Activated CD4-positive, alpha-beta T cell treated with anti-CD3 and anti-CD28 coated beads for 36 hours (primary cell): ENCODE measurements at regions of chrX and their contacts with region 1.

Region 1: DNA sequence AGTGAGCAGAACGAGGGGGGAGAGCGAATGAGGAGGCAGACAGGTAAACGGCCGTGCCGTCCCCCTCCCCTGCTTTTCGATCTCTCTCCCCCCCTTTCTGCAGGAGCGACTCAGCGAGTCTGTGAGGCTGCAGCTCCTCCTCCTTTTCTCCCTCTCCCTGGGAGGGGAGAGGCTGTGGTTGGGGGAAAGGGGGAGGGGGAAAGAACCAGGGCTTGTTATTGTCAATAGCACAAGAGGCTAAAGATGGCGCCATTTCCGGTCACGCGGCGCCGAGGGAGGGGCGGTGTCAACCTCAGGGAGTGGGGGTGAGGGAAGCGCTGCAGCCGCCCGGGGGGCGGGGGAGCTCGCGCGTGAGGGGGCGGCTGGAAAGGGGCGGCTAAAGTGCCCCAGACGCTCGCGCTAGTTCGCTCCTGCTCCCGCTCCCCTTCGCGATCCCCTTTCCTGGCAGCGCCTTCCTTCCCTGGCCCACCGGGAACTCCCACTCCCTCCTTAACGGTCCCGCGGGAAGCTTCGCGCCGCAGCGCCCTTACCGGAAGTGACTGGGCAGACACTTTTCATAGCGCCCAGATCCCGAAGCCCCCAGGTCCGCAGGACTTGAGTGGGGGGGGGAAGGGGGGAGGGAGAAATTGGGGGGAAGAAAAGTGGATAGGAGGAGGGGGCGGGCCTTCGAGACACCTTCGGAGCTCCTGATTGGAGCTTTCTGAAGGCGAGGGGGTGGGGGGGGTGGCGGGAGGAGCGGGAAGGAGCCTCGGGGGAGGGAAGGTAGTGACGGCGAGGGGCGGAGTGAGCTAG is at the start of gene CUL4B:
- DNase-seq: peak; percentile 95
- ATAC-seq: peak; percentile 86
- H3K4me3 Mint-ChIP-seq: peak within 1 kb of the TSS; percentile 90
- H3K27ac Mint-ChIP-seq: peak within 1 kb of the TSS; percentile 95
- H3K4me1 Mint-ChIP-seq: peaks cover 21% of the 10 kb centered on the region
- H3K27me3 Mint-ChIP-seq: no peaks in the 10 kb centered on the region
- total RNA-seq, gene CUL4B: 49.2 to 49.6 TPM

Region 2: DNA sequence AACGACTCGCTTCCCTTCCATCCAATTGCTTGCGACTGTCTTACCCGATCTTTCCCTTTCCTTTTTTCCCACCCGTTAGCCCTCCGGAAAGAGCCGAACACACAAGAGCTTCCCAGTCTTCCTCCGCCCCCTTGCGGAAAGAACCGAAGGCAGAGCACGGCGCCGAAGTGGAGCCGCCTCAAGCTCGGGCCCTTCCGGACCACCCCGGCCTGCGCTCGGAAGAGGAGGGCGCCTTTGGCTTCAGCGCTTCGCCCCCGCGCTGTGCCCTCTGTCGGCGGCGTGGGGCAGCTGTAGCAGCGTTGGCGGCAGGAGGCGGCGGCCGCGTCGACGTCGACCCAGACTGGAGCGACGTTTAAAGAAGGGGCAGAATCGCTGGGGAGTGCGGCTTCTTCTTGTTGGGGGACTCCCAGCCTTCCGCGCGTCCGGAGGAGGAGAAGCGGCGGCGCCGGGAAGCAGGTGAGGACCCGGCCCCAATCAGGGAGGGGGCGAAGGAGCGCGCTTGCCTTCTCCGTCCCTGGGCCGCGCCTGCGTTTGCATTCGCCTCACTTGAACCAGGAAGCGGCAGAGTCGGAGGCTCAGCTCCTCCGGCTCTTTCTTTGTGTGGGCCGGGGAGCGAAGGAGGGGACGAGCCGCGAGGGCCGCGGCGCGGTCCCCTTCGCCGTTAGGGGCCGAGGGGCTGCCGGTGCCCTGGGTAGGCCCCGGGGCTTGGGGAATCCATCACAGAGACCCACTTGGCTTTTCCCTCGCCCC is 310.3 kb before region 1 on chrX and contains the start of gene ZBTB33:
- CTCF ChIA-PET with region 1: no interaction called
- POLR2A ChIA-PET with region 1: no interaction called
- intact Hi-C with region 1: loop called in 1 of 2 experiments (anchors 2 kb)
- DNase-seq: peak; percentile 92
- ATAC-seq: peak; percentile 99
- H3K4me3 Mint-ChIP-seq: peak within 1 kb of the TSS; percentile 94
- H3K27ac Mint-ChIP-seq: peak within 1 kb of the TSS; percentile 92
- H3K4me1 Mint-ChIP-seq: peaks cover 22% of the 10 kb centered on the region
- H3K27me3 Mint-ChIP-seq: no peaks in the 10 kb centered on the region
- total RNA-seq, gene ZBTB33: 14.5 to 14.6 TPM

Region 3: GRCh38 chrX:120499301-120500072 is 61.6 kb before region 1 on chrX:
- CTCF ChIA-PET with region 1: no interaction called
- POLR2A ChIA-PET with region 1: interaction called, 5 read pairs
- intact Hi-C with region 1: loop called (anchors 2 kb)
- DNase-seq: no peak
- ATAC-seq: no peak
- H3K4me3 Mint-ChIP-seq: no peak overlapping the region
- H3K27ac Mint-ChIP-seq: no peak overlapping the region
- H3K4me1 Mint-ChIP-seq: peaks cover 3% of the 10 kb centered on the region
- H3K27me3 Mint-ChIP-seq: no peaks in the 10 kb centered on the region

Region 4: GRCh38 chrX:120575379-120576114 is 14.5 kb after region 1 on chrX:
- CTCF ChIA-PET with region 1: interaction called, 3 read pairs
- POLR2A ChIA-PET with region 1: interaction called, 10 read pairs
- intact Hi-C with region 1: no loop called
- DNase-seq: no peak
- ATAC-seq: no peak
- H3K4me3 Mint-ChIP-seq: no peak overlapping the region
- H3K27ac Mint-ChIP-seq: no peak overlapping the region
- H3K4me1 Mint-ChIP-seq: peaks cover 2% of the 10 kb centered on the region
- H3K27me3 Mint-ChIP-seq: peaks cover 2% of the 10 kb centered on the region

Region 5: DNA sequence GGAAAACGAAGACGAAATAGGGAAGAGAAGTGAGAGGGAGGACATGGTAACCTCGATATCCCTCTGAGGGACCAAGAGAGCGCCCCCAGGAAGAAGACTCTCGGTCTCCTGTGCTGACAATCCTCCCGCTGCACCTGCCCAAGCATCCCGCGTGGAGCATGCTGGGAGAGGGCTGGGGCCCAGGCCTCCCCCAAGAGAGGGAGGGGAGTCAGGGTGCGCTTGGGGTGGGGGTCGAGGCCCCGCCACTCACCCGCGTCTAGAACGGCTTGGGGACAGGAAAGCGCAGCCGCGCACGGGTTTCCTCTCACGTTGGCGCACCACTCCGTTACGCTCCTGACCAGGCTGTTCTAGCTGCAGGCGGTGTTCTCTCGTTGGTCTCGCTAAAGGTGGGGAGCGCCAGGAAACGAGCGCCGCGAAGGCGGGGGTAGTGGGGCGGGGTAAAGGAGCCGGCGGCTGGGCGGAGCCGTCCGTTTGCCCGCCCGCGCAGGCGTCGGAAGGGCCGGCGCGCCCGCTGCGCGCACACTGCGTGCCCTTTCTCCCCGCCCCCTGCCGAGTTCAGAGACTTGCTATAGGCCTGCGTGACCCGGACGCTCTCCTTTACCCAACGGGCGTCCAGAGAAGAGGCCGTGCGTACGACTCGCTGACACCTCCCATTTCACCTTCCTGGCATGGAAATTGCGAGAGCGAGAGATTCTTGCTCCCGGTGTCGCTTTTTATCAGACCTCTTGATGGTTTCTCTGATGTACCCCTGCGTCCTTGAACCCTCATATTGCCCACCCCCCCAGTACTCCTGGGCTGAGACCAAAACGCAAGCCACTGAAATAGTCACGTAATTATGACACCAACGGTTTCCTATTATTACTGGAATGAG is 68.9 kb after region 1 on chrX and contains the start of gene C1GALT1C1:
- CTCF ChIA-PET with region 1: no interaction called
- POLR2A ChIA-PET with region 1: no interaction called
- intact Hi-C with region 1: loop called (anchors 1 to 2 kb)
- DNase-seq: peak; percentile 95
- ATAC-seq: peak; percentile 95
- H3K4me3 Mint-ChIP-seq: peak within 1 kb of the TSS; percentile 91
- H3K27ac Mint-ChIP-seq: peak within 1 kb of the TSS; percentile 99
- H3K4me1 Mint-ChIP-seq: peaks cover 20% of the 10 kb centered on the region
- H3K27me3 Mint-ChIP-seq: no peaks in the 10 kb centered on the region
- total RNA-seq, gene C1GALT1C1: 15.1 to 18.2 TPM

Region 6: DNA sequence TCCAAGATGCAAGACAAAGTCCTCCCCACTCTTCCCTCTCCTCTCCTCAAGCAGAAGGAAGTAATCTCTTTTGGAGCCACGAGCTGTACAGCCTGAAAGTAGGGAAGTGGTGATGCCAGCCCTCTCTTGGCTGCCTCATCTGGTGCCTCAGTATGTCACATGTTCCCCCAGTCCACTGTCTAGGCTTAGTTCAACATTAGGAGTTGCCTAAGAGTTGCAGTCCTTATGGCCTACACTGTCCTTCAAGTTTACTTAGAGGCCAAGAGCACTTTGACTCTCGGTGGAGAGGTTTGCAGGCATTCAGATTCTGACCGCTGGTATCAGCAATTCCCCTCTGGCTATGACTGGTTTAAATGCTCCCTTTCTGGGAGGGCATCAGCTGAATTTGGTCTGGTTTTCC is 1221.9 kb after region 1 on chrX:
- CTCF ChIA-PET with region 1: no interaction called
- POLR2A ChIA-PET with region 1: no interaction called
- intact Hi-C with region 1: no loop called
- DNase-seq: no peak
- ATAC-seq: no peak
- H3K4me3 Mint-ChIP-seq: no peak overlapping the region
- H3K27ac Mint-ChIP-seq: no peak overlapping the region
- H3K4me1 Mint-ChIP-seq: no peaks in the 10 kb centered on the region
- H3K27me3 Mint-ChIP-seq: no peaks in the 10 kb centered on the region